PC-3 (cell line): ENCODE measurements at regions of chr7 and their contacts with region 1.

Region 1: DNA sequence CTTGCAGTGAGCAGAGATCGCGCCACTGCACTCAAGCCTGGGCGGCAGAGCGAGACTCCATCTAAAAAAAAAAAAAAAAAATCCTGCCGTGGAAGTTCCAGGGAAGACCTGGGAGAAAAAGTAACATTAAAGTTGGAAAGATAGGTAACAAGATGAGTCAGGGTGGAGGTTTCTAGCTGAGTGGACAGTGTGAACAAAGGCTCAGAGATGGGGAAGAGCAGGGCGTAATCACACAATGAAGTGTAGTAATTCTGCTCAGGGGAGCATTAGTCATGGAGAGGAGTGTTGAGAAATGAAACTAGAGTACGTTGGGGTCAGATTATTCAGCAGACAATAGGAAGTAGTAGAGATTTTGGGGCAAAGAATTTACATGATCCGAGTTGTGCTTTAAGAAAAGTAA is 21.6 kb upstream of the WASL start:
- DNase-seq: peak; percentile 89
- ATAC-seq: peak; percentile 73
- H3K4me3 ChIP-seq: peak overlapping the region; percentile 43
- H3K27ac ChIP-seq: peak overlapping the region; percentile 75
- H3K4me1 ChIP-seq: peaks cover 60% of the 10 kb centered on the region
- H3K27me3 ChIP-seq: no peaks in the 10 kb centered on the region
- CTCF ChIP-seq: no peak

Region 2: DNA sequence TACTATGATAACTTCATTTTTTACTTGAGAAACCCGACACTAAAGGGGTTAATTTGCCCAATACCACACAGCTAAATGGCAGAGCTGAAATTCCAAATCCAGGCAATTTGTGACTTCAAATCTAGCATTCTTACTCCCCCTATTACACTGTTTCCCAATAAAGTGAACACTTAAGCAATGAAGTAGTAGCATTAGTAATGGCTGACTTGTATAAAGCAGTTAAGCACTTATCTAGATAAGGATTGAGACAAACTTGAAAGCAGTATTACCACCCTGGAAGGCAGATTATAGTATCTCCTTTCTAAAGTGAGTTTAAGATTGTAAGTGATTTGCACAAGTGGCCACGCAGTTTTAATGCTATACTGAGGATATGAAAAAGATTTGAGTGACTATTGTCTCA is 60.9 kb before region 1 on chr7:
- CTCF ChIA-PET with region 1: no interaction called
- POLR2A ChIA-PET with region 1: no interaction called
- intact Hi-C with region 1: no loop called
- DNase-seq: no peak
- ATAC-seq: no peak
- H3K4me3 ChIP-seq: no peak overlapping the region
- H3K27ac ChIP-seq: no peak overlapping the region
- H3K4me1 ChIP-seq: peaks cover 3% of the 10 kb centered on the region; the same call in 1 of the 2 replicates
- H3K27me3 ChIP-seq: no peaks in the 10 kb centered on the region
- CTCF ChIP-seq: no peak

Region 3: DNA sequence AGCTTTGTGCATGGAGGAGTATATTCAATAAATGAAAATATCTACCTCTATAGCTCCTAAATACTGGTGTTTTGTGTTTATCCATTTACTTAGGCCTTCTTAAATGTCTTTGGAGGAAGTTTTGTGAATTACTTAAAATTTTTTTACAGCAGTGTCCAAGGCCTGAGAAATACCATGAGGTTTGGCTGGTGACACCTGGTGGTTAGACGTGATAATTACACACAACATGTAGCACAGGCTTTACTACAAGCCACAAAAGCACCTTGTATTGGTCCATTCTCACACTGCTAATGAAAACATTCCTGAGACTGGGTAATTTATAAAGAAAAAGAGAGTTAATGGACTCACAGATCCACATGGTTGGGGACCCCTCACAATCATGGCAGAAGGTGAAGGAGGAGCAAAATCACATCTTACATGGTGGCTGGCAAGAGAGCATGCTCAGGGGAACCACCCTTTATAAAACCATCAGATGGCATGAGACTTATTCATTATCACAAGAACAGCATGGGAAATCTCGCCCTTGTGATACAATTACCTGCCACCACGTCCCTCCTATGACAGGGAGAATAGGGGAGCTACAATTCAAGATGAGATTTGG is 95.2 kb after region 1 on chr7:
- CTCF ChIA-PET with region 1: interaction called, 7 read pairs
- POLR2A ChIA-PET with region 1: no interaction called
- intact Hi-C with region 1: loop called (anchors 1 kb)
- DNase-seq: peak; percentile 78
- ATAC-seq: peak; percentile 95
- H3K4me3 ChIP-seq: no peak overlapping the region
- H3K27ac ChIP-seq: no peak overlapping the region
- H3K4me1 ChIP-seq: peaks cover 7% of the 10 kb centered on the region
- H3K27me3 ChIP-seq: no peaks in the 10 kb centered on the region
- CTCF ChIP-seq: peak; percentile 82

Region 4: GRCh38 chr7:124390301-124390700 is 619.9 kb after region 1 on chr7:
- CTCF ChIA-PET with region 1: no interaction called
- POLR2A ChIA-PET with region 1: no interaction called
- intact Hi-C with region 1: no loop called
- DNase-seq: no peak
- ATAC-seq: no peak
- H3K4me3 ChIP-seq: no peak overlapping the region
- H3K27ac ChIP-seq: no peak overlapping the region
- H3K4me1 ChIP-seq: no peaks in the 10 kb centered on the region
- H3K27me3 ChIP-seq: no peaks in the 10 kb centered on the region
- CTCF ChIP-seq: no peak